ENCODE measurements at regions of chr9 and their contacts with region 1.

Region 1: GRCh38 chr9:71806901-71807307 is 38.6 kb upstream of the CEMIP2 start:
- ATAC-seq: peak in 7 of 8 experiments; percentile 55 to 99 (median 90)
- H3K4me3 ChIP-seq: no peak overlapping the region
- H3K27ac ChIP-seq: no peak overlapping the region
- H3K4me1 ChIP-seq: no peaks in the 10 kb centered on the region

Region 2: GRCh38 chr9:71984403-71984802 is 177.5 kb after region 1 on chr9:
- in situ Hi-C with region 1: loop called in 1 of 9 experiments (anchors 25 kb)
- ATAC-seq: peak in 3 of 8 experiments; percentile 67 to 98 (median 95)
- H3K4me3 ChIP-seq: no peak overlapping the region
- H3K27ac ChIP-seq: no peak overlapping the region
- H3K4me1 ChIP-seq: no peaks in the 10 kb centered on the region

Region 3: GRCh38 chr9:72022841-72023240 is 215.9 kb after region 1 on chr9:
- in situ Hi-C with region 1: loop called in 2 of 9 experiments (anchors 25 kb)
- ATAC-seq: peak in 2 of 8 experiments; percentile 30 to 35
- H3K4me3 ChIP-seq: no peak overlapping the region
- H3K27ac ChIP-seq: no peak overlapping the region
- H3K4me1 ChIP-seq: no peaks in the 10 kb centered on the region

Measured in motor neuron (in vitro differentiated cells).